ENCODE measurements at regions of chr3 and their contacts with region 1.

Region 1: DNA sequence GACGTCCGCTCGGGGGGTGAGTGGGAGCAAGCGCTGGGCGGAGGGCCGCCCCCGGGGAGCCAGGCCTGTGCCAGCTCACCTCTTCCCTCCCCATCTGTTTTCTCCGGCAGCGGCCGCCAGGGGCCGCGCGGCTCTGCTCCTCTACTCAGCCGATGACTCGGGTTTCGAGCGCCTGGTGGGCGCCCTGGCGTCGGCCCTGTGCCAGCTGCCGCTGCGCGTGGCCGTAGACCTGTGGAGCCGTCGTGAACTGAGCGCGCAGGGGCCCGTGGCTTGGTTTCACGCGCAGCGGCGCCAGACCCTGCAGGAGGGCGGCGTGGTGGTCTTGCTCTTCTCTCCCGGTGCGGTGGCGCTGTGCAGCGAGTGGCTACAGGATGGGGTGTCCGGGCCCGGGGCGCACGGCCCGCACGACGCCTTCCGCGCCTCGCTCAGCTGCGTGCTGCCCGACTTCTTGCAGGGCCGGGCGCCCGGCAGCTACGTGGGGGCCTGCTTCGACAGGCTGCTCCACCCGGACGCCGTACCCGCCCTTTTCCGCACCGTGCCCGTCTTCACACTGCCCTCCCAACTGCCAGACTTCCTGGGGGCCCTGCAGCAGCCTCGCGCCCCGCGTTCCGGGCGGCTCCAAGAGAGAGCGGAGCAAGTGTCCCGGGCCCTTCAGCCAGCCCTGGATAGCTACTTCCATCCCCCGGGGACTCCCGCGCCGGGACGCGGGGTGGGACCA is 632 bp upstream of the CRELD1 start:
- DNase-seq: no peak
- H3K4me3 ChIP-seq: peak overlapping the region; percentile 53
- H3K27me3 ChIP-seq: no peaks in the 10 kb centered on the region
- CTCF ChIP-seq: peak; percentile 89

Region 2: DNA sequence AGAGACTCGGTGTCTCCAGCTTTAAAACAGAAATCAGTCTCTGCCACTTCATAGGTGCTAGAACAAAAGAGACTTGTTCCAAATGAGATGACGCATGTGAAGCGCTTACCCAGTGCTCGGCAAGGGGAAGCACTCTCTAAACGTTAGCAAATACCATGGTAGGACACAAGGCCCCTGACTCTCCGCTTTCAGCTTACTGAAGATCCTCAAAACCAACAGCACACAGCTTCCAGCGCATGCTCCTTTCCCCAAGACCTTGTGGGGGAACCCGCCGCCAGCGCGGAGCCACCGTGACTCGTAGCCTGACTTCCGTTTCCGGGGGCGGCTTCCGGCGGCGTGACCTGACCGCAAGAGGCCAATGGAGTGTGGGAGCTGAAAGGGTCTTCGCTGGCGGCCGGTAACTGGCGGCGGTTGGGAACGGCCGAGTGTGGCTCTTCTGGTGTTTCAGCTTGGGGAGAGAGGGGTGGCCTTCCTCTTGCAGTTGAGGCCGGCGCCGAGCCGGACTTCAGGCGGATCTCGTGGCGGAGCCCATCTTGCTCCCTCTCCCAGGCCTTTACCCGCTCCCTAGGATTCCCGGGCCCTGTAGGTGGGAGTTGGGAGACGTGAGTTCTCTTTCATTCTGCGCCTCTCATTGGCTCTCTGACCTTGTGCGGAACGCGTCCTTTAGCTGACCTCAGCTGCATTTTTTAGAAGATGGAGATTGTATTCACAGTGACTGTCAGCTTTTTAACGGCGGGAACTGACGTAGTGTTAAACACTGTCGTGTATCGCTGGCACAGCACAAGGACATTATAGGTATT is 570.1 kb before region 1 on chr3 and contains the start of gene THUMPD3:
- CTCF ChIA-PET with region 1: no interaction called
- POLR2A ChIA-PET with region 1: no interaction called
- DNase-seq: peak; percentile 49
- H3K4me3 ChIP-seq: peak within 1 kb of the TSS; percentile 58
- H3K27me3 ChIP-seq: no peaks in the 10 kb centered on the region
- CTCF ChIP-seq: 0 out of 2 replicates have a peak, but pooled peaks have one; percentile 6
- polyA plus RNA-seq, gene THUMPD3: 18.2 and 38.5 TPM in 2 replicates

Region 3: GRCh38 chr3:9698293-9698692 is 234.7 kb before region 1 on chr3:
- CTCF ChIA-PET with region 1: no interaction called
- POLR2A ChIA-PET with region 1: interaction called, 15 read pairs
- DNase-seq: no peak
- H3K4me3 ChIP-seq: no peak overlapping the region
- H3K27me3 ChIP-seq: no peaks in the 10 kb centered on the region
- CTCF ChIP-seq: no peak

Region 4: DNA sequence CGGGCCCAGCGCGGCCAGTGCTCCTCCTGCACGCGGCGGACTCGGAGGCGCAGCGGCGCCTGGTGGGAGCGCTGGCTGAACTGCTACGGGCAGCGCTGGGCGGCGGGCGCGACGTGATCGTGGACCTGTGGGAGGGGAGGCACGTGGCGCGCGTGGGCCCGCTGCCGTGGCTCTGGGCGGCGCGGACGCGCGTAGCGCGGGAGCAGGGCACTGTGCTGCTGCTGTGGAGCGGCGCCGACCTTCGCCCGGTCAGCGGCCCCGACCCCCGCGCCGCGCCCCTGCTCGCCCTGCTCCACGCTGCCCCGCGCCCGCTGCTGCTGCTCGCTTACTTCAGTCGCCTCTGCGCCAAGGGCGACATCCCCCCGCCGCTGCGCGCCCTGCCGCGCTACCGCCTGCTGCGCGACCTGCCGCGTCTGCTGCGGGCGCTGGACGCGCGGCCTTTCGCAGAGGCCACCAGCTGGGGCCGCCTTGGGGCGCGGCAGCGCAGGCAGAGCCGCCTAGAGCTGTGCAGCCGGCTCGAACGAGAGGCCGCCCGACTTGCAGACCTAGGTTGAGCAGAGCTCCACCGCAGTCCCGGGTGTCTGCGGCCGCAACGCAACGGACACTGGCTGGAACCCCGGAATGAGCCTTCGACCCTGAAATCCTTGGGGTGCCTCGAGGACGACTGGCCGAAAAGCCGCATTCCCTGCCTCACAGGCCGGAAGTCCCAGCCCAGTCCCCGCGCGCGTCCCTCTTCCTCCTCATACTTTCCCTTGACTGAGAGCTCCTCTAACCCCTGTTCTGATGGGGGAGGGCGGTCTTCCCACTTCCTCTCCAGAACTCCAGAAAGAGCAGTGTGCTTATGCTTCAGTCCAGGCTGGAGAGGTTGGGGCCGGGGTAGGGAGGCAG is 17.5 kb before region 1 on chr3:
- CTCF ChIA-PET with region 1: interaction called, 29 read pairs
- POLR2A ChIA-PET with region 1: no interaction called
- DNase-seq: no peak
- H3K4me3 ChIP-seq: peak overlapping the region; percentile 40
- H3K27me3 ChIP-seq: no peaks in the 10 kb centered on the region
- CTCF ChIP-seq: peak; percentile 50

Region 5: DNA sequence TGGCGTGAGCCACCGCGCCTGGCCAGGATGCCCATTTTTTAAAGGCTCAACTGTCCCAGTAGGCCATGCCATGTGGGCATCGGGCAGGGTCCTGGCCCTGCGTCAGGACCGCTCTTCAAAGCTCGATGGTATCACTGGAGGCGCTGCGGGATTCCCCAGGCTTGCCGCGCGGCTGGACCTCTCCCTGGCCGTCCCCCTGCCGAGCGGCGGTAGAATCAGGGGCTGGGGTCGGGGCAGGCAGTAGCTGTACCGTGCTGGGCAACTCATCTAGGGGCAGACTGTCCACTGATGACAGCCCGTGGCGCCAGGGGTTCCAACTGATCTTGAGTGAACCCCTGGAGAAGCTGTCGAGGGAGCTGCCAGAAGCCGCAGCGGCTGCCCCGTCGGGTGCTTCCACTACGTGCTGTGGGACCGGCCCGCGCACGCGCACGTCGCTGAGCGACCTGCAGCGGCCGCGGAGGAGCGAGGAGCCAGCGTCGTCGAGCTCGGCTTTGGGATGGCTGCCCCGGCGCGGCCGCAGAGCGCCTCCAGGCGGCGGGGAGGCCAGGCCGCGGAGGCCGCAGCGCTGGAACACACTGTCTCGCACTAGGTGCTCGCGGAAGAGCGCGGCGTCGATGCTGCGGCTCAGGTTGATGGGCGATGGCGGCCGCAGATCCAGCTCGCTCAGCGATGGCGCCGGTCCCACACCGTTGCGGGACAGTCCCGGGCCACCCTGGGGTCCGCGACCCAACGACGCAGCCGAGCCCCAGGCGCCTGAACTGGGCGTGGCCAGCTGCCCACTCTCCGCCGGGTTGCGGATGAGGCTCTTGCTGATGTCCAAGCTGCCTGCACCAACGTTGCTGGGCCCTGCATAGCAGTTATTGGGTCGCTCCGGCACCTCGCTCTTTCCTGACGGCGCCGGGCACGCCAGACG is 13.4 kb after region 1 on chr3:
- CTCF ChIA-PET with region 1: interaction called, 25 read pairs
- POLR2A ChIA-PET with region 1: interaction called, 3 read pairs
- DNase-seq: peak; percentile 45
- H3K4me3 ChIP-seq: peak overlapping the region; percentile 50
- H3K27me3 ChIP-seq: no peaks in the 10 kb centered on the region
- CTCF ChIP-seq: peak; percentile 45

Region 6: DNA sequence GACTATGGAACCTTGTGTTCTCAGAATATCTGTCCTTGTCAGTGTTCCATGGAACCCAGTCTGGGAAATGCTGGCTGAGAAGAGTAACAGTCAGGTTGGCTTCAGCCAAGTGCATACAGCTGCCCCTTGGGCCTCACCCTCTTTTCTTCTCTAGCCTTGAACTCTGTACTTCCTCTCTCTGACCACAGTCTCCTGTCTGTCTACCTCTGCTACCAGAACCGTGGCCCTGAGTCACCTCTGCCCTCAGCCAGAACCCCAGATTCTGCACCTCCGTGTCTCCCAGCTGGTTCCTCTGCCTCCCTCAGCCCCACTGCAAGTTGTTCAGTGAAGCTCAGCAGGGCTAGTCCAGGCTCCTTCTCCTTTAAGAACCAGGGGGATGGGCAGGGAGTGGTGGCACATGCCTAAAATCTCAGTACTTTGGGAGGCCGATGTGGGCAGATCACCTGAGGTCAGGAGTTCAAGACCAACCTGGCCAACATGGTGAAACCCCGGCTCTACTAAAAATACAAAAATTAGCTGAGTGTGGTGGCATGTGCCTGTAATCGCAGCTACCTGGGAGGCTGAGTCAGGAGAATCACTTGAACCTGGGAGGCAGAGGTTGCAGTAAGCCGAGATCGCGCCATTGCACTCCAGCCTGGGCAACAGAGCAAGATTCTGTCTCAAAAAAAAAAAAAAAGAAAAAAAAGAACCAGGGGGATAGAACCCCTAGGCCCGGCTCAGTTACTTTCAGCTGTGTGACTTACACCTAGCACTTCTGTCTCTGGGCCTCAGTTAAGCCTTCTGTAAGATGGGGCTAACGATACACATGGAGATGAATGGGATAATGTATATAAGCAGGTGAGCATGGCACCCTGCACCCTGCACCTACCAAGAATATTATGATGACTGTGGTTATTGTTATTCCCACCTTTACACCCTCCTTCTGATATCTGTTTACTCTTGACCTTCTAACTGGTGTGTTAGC is 291.0 kb after region 1 on chr3:
- CTCF ChIA-PET with region 1: interaction called, 11 read pairs
- POLR2A ChIA-PET with region 1: interaction called, 3 read pairs
- DNase-seq: no peak
- H3K4me3 ChIP-seq: no peak overlapping the region
- H3K27me3 ChIP-seq: no peaks in the 10 kb centered on the region
- CTCF ChIP-seq: no peak

Measured in BJ (cell line).